Naive thymus-derived CD4-positive, alpha-beta T cell (primary cell): ENCODE measurements at regions of chr22 and their contacts with region 1.

Region 1: DNA sequence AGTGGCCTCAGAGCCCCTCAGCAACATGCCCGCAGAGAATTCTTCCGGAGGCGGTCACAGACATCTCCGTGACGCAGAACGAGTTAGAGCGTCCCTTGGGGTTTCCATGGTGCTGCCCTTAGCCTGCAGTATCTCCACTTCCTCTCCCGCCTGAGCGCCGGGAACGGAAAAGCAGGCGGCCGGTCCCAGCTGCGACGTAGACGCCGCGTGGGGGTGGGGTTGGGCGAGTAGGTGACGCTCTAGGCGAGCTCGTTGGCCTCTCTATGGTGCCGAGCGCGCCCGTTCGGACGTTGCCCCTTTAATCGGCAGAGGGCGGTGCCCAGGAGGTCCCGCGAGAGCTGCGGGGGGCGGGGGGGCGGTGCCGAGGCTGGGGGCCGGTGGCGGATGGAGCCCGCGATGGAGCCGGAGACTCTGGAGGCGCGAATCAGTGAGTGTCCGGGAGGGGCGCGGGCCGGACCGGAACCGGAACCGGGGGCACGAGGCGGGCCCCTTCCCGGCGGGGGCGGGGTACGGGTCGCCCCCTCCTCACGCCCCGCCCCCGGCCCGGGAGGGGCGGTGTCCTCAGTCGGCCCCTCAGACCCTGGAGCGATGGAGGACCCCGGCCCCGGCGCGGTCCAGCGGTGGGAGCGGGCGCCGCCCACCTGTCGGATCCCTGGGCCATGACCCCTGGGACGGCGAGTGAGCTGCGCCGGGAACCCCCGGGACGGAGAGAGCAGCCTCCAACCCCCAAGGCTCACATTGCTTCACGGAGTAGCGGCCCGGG is at the start of gene GGA1:
- DNase-seq: peak; percentile 92 to 99 (median 97)
- ATAC-seq: peak; percentile 89
- H3K4me3 ChIP-seq: peak within 1 kb of the TSS; percentile 81
- H3K4me3 Mint-ChIP-seq: peak within 1 kb of the TSS; percentile 88 to 97 (median 93)
- H3K27ac ChIP-seq: peak within 1 kb of the TSS; percentile 85
- H3K27ac Mint-ChIP-seq: peak within 1 kb of the TSS; percentile 93 to 99 (median 97)
- H3K4me1 ChIP-seq: peaks cover 46 to 47% of the 10 kb centered on the region in 2 donors
- H3K4me1 Mint-ChIP-seq: peaks cover 36 to 72% (median 57%) of the 10 kb centered on the region in 7 donors
- H3K27me3 ChIP-seq: no peaks in the 10 kb centered on the region
- H3K27me3 Mint-ChIP-seq: peaks cover 0 to 6% (median 0%) of the 10 kb centered on the region in 5 donors
- total RNA-seq, gene GGA1: 64.2 to 124 (median 102) TPM

Region 2: GRCh38 chr22:36481393-36482168 is 1127.1 kb before region 1 on chr22 and contains the start of gene TXN2:
- CTCF ChIA-PET with region 1: no interaction called
- POLR2A ChIA-PET with region 1: no interaction called
- intact Hi-C with region 1: loop called in 1 of 2 experiments (anchors 5 kb)
- DNase-seq: peak; percentile 91 to 99 (median 98)
- ATAC-seq: peak; percentile 90
- H3K4me3 ChIP-seq: peak within 1 kb of the TSS; percentile 55
- H3K4me3 Mint-ChIP-seq: peak within 1 kb of the TSS; percentile 90 to 100 (median 96)
- H3K27ac ChIP-seq: peak within 1 kb of the TSS; percentile 96
- H3K27ac Mint-ChIP-seq: peak within 1 kb of the TSS; percentile 78 to 99 (median 95)
- H3K4me1 ChIP-seq: peaks cover 8 to 15% of the 10 kb centered on the region in 2 donors
- H3K4me1 Mint-ChIP-seq: peaks cover 15 to 30% (median 18%) of the 10 kb centered on the region in 7 donors
- H3K27me3 ChIP-seq: no peaks in the 10 kb centered on the region
- H3K27me3 Mint-ChIP-seq: peaks cover 0 to 2% (median 0%) of the 10 kb centered on the region in 5 donors
- total RNA-seq, gene TXN2: 35.5 to 69.9 (median 37.7) TPM

Region 3: GRCh38 chr22:37244114-37244921 is 364.3 kb before region 1 on chr22 and contains the start of gene RAC2:
- CTCF ChIA-PET with region 1: no interaction called
- POLR2A ChIA-PET with region 1: interaction called, 3 read pairs
- intact Hi-C with region 1: loop called (anchors 5 kb)
- DNase-seq: peak; percentile 62 to 89 (median 76)
- ATAC-seq: peak; percentile 76
- H3K4me3 ChIP-seq: peak within 1 kb of the TSS; percentile 90
- H3K4me3 Mint-ChIP-seq: peak within 1 kb of the TSS; percentile 86 to 99 (median 98)
- H3K27ac ChIP-seq: peak within 1 kb of the TSS; percentile 86
- H3K27ac Mint-ChIP-seq: peak within 1 kb of the TSS; percentile 89 to 99 (median 97)
- H3K4me1 ChIP-seq: peaks cover 42 to 43% of the 10 kb centered on the region in 2 donors
- H3K4me1 Mint-ChIP-seq: peaks cover 33 to 54% (median 50%) of the 10 kb centered on the region in 7 donors
- H3K27me3 ChIP-seq: no peaks in the 10 kb centered on the region
- H3K27me3 Mint-ChIP-seq: no peaks in the 10 kb centered on the region
- total RNA-seq, gene RAC2: 263 to 886 (median 301) TPM

Region 4: GRCh38 chr22:37546437-37547255 is 62.0 kb before region 1 on chr22:
- CTCF ChIA-PET with region 1: no interaction called
- POLR2A ChIA-PET with region 1: no interaction called
- intact Hi-C with region 1: no loop called
- DNase-seq: no peak
- ATAC-seq: no peak
- H3K4me3 ChIP-seq: no peak overlapping the region
- H3K4me3 Mint-ChIP-seq: no peak overlapping the region
- H3K27ac ChIP-seq: no peak overlapping the region
- H3K27ac Mint-ChIP-seq: peak overlapping the region in 1 of 9 donors; percentile 28
- H3K4me1 ChIP-seq: peaks cover 0 to 7% of the 10 kb centered on the region in 2 donors
- H3K4me1 Mint-ChIP-seq: peaks cover 2 to 15% (median 6%) of the 10 kb centered on the region in 7 donors
- H3K27me3 ChIP-seq: no peaks in the 10 kb centered on the region
- H3K27me3 Mint-ChIP-seq: peaks cover 0 to 18% (median 5%) of the 10 kb centered on the region in 5 donors

Region 5: DNA sequence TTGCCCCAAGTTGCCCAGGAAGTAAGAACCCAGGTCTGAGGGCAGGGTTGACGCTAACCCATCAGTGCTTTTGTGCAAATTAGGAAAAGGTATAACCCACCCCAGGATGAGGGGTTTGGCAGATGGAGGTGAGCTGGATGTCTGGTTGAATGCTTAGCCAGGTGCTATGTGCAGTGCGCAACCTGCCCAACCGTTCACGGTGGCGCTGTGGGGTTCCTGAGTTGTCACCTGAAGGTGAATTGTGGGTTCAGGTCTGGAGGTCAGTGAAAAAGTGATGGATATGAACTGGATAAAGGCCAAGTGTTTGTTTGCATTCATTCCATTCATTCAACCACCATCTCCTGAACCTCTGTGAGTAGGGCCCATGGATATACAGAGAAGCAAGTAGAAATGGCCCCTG is 14.4 kb before region 1 on chr22:
- CTCF ChIA-PET with region 1: interaction called, 36 read pairs
- POLR2A ChIA-PET with region 1: interaction called, 38 read pairs
- intact Hi-C with region 1: loop called (anchors 1 kb)
- DNase-seq: no peak
- ATAC-seq: no peak
- H3K4me3 ChIP-seq: no peak overlapping the region
- H3K4me3 Mint-ChIP-seq: no peak overlapping the region
- H3K27ac ChIP-seq: no peak overlapping the region
- H3K27ac Mint-ChIP-seq: no peak overlapping the region
- H3K4me1 ChIP-seq: peaks cover 0 to 5% of the 10 kb centered on the region in 2 donors
- H3K4me1 Mint-ChIP-seq: peaks cover 11 to 14% (median 12%) of the 10 kb centered on the region in 7 donors
- H3K27me3 ChIP-seq: no peaks in the 10 kb centered on the region
- H3K27me3 Mint-ChIP-seq: peaks cover 0 to 8% (median 0%) of the 10 kb centered on the region in 5 donors

Region 6: GRCh38 chr22:37643225-37643847 is 34.7 kb after region 1 on chr22:
- CTCF ChIA-PET with region 1: interaction called, 10 read pairs
- POLR2A ChIA-PET with region 1: interaction called, 74 read pairs
- intact Hi-C with region 1: loop called (anchors 1 kb)
- DNase-seq: peak; percentile 65 to 90 (median 81)
- ATAC-seq: peak; percentile 83
- H3K4me3 ChIP-seq: peak overlapping the region; percentile 45
- H3K4me3 Mint-ChIP-seq: peak overlapping the region; percentile 29 to 75 (median 55)
- H3K27ac ChIP-seq: peak overlapping the region; percentile 24
- H3K27ac Mint-ChIP-seq: peak overlapping the region; percentile 51 to 89 (median 74)
- H3K4me1 ChIP-seq: peaks cover 34 to 39% of the 10 kb centered on the region in 2 donors
- H3K4me1 Mint-ChIP-seq: peaks cover 12 to 47% (median 30%) of the 10 kb centered on the region in 7 donors
- H3K27me3 ChIP-seq: no peaks in the 10 kb centered on the region
- H3K27me3 Mint-ChIP-seq: no peaks in the 10 kb centered on the region

Region 7: DNA sequence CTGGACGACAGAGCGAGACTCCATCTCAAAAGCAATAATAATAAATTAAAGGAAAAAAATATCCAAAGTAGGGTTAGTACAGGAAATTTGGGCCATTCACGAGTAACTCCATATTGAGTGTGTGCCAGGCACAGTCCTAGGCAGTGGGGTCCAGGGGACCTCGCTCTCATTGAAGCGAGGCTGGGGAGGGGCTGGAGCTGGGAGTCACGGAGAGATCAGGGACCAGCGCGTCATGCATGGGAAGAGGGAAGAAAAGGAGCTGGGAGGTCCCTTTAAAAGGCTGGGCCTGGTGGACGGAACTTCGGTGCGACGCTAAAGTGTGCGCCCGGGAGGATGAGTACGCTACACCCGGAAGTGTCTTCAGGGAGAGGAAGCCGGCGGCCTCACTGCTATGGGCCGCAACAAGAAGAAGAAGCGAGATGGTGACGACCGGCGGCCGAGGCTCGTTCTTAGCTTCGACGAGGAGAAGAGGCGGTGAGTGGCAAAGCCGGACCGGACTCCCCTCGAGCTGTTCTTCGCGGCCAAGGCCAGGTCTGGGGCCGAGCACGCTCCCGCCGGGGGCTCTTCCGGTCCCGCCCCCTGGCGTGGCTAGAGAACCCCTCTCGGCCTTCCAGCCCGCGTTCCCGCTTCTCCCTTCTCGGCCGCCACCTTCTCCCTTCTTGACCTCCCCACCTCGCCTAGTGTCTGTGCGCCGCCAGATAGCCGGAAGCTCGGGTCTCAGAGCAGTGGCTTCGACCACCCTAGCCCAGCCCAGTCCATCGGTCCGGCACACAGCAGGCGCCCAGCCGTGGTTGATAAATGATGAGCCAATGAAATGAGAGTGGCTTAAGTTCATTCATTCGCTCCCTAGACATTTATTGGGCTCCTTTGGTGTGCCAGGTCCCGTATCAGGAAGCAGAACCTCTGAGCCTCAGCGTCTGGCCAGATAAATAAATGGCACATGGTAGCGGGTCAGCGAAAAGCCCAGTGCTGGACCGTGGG is 77.6 kb after region 1 on chr22 and contains the start of gene NOL12:
- CTCF ChIA-PET with region 1: interaction called, 10 read pairs
- POLR2A ChIA-PET with region 1: interaction called, 28 read pairs
- intact Hi-C with region 1: loop called (anchors 1 kb)
- DNase-seq: peak; percentile 63 to 82 (median 78)
- ATAC-seq: peak; percentile 91
- H3K4me3 ChIP-seq: peak within 1 kb of the TSS; percentile 82
- H3K4me3 Mint-ChIP-seq: peak within 1 kb of the TSS; percentile 93 to 98 (median 96)
- H3K27ac ChIP-seq: peak within 1 kb of the TSS; percentile 84
- H3K27ac Mint-ChIP-seq: peak within 1 kb of the TSS; percentile 88 to 99 (median 95)
- H3K4me1 ChIP-seq: peaks cover 18 to 22% of the 10 kb centered on the region in 2 donors
- H3K4me1 Mint-ChIP-seq: peaks cover 16 to 39% (median 33%) of the 10 kb centered on the region in 7 donors
- H3K27me3 ChIP-seq: no peaks in the 10 kb centered on the region
- H3K27me3 Mint-ChIP-seq: no peaks in the 10 kb centered on the region
- total RNA-seq, gene NOL12: 32.8 to 52.5 (median 45.3) TPM

Region 8: GRCh38 chr22:37849089-37849751 is 240.6 kb after region 1 on chr22 and contains the start of gene EIF3L:
- CTCF ChIA-PET with region 1: no interaction called
- POLR2A ChIA-PET with region 1: interaction called, 6 read pairs
- intact Hi-C with region 1: loop called (anchors 1 to 2 kb)
- DNase-seq: peak; percentile 79 to 90 (median 84)
- ATAC-seq: peak; percentile 79
- H3K4me3 ChIP-seq: peak within 1 kb of the TSS; percentile 77
- H3K4me3 Mint-ChIP-seq: peak within 1 kb of the TSS; percentile 91 to 99 (median 95)
- H3K27ac ChIP-seq: peak within 1 kb of the TSS; percentile 79
- H3K27ac Mint-ChIP-seq: peak within 1 kb of the TSS; percentile 89 to 100 (median 98)
- H3K4me1 ChIP-seq: peaks cover 21 to 26% of the 10 kb centered on the region in 2 donors
- H3K4me1 Mint-ChIP-seq: peaks cover 26 to 60% (median 50%) of the 10 kb centered on the region in 7 donors
- H3K27me3 ChIP-seq: no peaks in the 10 kb centered on the region
- H3K27me3 Mint-ChIP-seq: no peaks in the 10 kb centered on the region
- total RNA-seq, gene EIF3L: 383 to 586 (median 525) TPM